HCT116 (cell line): ENCODE measurements at regions of chr2 and their contacts with region 1.

Region 1: DNA sequence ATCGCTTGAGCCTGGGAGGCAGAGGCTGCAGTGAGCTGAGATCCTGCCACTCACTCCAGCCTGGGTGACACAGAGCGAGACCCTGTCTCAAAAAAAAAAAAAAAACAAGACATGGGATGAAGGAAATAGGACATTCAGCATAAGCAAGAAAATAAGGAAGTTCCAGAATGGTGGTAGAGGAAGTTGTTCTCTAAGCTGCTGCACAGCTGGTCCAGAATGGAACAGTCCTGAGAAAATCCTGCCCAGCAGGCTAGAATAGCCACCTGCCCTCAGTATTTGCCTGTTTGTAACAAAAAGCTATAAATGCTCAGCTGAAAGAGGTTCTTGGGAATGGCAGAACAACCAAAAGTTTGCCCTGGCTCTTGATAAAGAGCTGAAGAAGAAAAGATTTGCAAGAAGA is 11.1 kb upstream of the MAPRE3 start:
- DNase-seq: no peak
- ATAC-seq: no peak
- H3K4me3 ChIP-seq: no peak overlapping the region
- H3K27ac ChIP-seq: no peak overlapping the region
- H3K4me1 ChIP-seq: peaks cover 0 to 7% of the 10 kb centered on the region in 2 experiments; a peak in 2 of 4 replicates
- H3K27me3 ChIP-seq: no peaks in the 10 kb centered on the region
- CTCF ChIP-seq: no peak
- POLR2A ChIP-seq: no peak
- RAD21 ChIP-seq: no peak

Region 2: DNA sequence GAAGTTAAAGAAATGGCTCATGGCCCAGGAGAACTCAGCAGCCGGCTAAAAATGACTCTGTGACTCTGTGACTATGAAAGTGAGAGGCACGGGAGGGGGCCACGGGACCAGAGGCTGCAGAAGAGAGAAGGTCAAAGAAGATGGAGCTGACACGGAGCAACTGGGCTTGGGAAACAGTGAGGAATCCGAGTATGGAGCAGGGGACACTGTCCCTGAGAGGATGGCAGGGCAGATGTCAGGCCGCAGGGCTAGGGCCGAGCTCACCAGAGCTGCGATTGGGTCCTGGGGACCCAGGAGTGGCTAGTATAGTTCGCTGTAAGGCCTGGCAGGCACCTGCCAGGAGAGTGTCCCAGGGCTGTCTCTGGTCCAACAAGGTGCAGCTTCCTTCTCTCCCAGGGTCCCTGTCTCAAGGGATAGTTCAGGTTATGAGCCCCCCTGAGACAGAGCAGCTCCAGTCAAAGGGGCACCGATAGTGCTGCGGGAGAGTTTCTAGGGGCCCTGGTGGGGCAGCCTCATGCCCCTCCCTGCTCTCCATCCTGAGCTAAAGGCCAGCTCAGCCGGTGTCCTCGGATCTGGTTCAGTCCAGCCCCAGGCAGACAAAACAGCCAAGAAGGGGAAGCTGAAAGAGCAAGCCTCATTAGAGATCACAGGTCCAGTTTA is 360.9 kb before region 1 on chr2:
- CTCF ChIA-PET with region 1: no interaction called
- POLR2A ChIA-PET with region 1: no interaction called
- RAD21 ChIA-PET with region 1: no interaction called
- intact Hi-C with region 1: no loop called
- DNase-seq: no peak
- ATAC-seq: no peak
- H3K4me3 ChIP-seq: no peak overlapping the region
- H3K27ac ChIP-seq: no peak overlapping the region
- H3K4me1 ChIP-seq: no peaks in the 10 kb centered on the region
- H3K27me3 ChIP-seq: no peaks in the 10 kb centered on the region; the same call in none of the 2 replicates
- CTCF ChIP-seq: no peak
- POLR2A ChIP-seq: no peak
- RAD21 ChIP-seq: no peak

Region 3: DNA sequence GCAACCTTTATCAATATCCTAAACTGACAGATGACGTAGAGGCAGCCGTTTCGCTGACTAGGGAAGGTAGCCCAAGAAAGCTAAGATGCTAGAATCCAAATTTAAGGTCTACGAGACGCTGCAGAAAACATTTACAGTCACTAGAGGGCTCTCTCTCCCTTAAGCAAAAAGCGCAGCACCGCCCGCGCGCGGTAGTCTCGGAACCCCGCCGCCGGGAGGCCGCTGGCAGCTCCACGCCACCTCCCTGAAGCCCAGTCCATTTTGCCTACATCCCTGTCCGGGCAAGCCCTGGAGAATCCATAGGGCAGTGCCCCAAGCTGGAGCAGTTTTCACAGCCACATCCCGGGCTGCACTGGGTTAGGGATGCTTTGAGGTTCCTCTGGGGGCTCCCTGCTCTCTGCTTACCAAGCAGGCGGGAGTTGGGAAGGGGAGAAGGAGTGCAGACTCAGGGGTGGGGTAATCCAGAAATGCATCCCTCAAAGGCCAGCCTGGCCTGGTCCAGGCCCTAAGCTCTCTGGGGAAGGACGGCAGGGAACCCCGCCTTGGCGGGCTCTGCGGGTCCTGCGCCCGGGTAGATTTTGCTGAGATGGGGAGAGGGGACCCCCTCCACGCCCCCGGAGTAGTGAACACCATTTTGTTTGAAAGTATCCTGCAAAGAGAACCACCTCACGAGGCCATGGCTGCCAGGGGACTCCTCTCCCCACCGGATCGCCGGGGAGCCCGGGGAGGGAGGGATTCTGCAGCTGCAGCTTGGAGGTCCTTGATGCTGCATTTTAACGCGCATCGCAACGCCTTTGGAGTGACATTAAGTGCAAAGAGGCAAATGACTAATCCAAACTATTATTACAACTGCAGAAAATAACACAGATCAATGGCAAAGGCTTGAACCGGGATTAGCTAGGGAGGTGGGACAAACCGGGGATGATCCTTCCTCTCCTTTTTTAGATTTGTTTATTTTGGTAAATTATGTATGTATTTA is 112.7 kb before region 1 on chr2:
- CTCF ChIA-PET with region 1: interaction called, 20 read pairs
- POLR2A ChIA-PET with region 1: no interaction called
- RAD21 ChIA-PET with region 1: interaction called in 1 of 2 experiments, 5 read pairs
- intact Hi-C with region 1: no loop called
- DNase-seq: peak; percentile 64
- ATAC-seq: peak; percentile 80
- H3K4me3 ChIP-seq: no peak overlapping the region; a peak in 1 of 4 replicates
- H3K27ac ChIP-seq: no peak overlapping the region
- H3K4me1 ChIP-seq: peaks cover 0 to 22% of the 10 kb centered on the region in 2 experiments; a peak in 3 of 4 replicates
- H3K27me3 ChIP-seq: no peaks in the 10 kb centered on the region
- CTCF ChIP-seq: peak; percentile 79 to 97 (median 84)
- POLR2A ChIP-seq: no peak
- RAD21 ChIP-seq: peak; percentile 97

Region 4: DNA sequence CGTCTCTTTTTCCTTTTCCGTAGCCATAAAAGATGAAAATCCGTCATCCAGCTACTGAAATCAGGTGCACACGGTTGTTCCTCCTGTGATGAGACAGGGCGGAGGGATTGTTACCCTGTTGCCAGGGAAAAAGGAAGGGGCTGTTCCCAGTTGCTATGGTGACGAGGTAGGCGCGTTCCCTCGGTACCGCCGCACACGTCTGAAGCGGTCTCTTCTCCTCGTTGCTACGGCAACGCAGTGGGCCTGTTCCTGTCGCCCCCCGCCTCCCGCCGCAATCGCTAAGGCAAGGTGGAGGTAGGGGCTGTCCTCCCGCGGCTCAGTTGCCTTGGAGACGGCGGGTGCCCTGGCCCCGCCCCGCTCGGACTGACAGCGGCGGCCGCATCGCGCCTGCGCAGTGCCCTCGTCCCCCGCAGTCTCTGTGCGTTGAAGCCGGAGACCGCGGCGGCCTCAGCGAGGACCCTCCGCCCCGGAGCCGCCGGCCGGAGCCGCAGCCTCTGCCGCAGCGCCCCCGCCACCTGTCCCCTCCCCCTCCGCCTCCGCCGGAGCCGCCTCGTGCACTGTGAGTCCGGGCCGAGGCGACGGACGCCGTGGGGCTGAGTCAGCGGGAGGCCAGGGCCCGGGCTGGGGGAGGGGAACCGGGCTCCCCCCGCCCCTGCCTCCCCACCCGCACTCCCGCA is 11.1 kb after region 1 on chr2 and contains the start of gene MAPRE3:
- CTCF ChIA-PET with region 1: interaction called, 10 read pairs
- POLR2A ChIA-PET with region 1: no interaction called
- RAD21 ChIA-PET with region 1: no interaction called
- intact Hi-C with region 1: no loop called
- DNase-seq: peak; percentile 53
- ATAC-seq: peak; percentile 94
- H3K4me3 ChIP-seq: peak within 1 kb of the TSS; percentile 44 to 62
- H3K27ac ChIP-seq: no peak within 1 kb of the TSS
- H3K4me1 ChIP-seq: peaks cover 4 to 23% of the 10 kb centered on the region in 2 experiments; a peak in 3 of 4 replicates
- H3K27me3 ChIP-seq: peaks cover 5% of the 10 kb centered on the region; the same call in 1 of the 2 replicates
- CTCF ChIP-seq: no peak
- POLR2A ChIP-seq: no peak
- RAD21 ChIP-seq: no peak
- total RNA-seq, gene MAPRE3: 12.1 TPM

Region 5: GRCh38 chr2:26982102-26982742 is 22.9 kb after region 1 on chr2:
- CTCF ChIA-PET with region 1: interaction called, 15 read pairs
- POLR2A ChIA-PET with region 1: no interaction called
- RAD21 ChIA-PET with region 1: no interaction called
- intact Hi-C with region 1: no loop called
- DNase-seq: peak; percentile 36
- ATAC-seq: peak; percentile 94
- H3K4me3 ChIP-seq: no peak overlapping the region
- H3K27ac ChIP-seq: no peak overlapping the region
- H3K4me1 ChIP-seq: peaks cover 10 to 29% of the 10 kb centered on the region in 2 experiments
- H3K27me3 ChIP-seq: no peaks in the 10 kb centered on the region
- CTCF ChIP-seq: peak in 2 of 3 experiments; percentile 53 to 55; a peak in 4 of 6 replicates
- POLR2A ChIP-seq: no peak
- RAD21 ChIP-seq: no peak

Region 6: DNA sequence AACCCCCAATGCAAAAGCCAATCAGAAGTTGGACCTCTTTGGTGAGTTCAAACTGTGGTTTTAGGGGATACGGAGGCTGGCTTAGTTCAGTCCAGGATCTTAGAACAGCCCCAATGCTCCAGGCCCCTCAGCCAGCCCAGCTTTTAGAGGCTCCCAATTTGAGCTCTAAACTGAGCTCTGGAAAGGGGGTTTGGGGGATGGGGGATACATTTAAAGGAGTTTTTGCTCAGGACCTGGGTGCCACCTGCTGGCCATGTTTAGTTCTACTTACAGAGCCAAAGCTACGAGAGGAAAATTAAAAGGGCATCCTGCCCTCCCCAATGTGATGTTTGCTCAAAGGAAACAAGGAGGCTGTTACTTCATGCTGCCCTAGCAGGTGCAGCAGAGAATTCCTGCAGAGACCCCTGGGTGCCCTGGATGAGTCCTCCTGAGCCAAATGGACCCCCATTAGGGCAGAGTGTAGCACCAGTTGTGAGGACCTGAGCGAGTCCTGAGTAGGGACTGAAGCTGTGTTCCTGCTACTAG is 57.5 kb after region 1 on chr2:
- CTCF ChIA-PET with region 1: interaction called, 154 read pairs
- POLR2A ChIA-PET with region 1: interaction called, 14 read pairs
- RAD21 ChIA-PET with region 1: interaction called, 28 to 32 read pairs
- intact Hi-C with region 1: loop called (anchors 1 kb)
- DNase-seq: peak; percentile 50
- ATAC-seq: peak; percentile 74
- H3K4me3 ChIP-seq: no peak overlapping the region
- H3K27ac ChIP-seq: no peak overlapping the region
- H3K4me1 ChIP-seq: peaks cover 25 to 50% of the 10 kb centered on the region in 2 experiments
- H3K27me3 ChIP-seq: no peaks in the 10 kb centered on the region
- CTCF ChIP-seq: peak; percentile 68 to 85 (median 84)
- POLR2A ChIP-seq: no peak
- RAD21 ChIP-seq: peak; percentile 92

Region 7: DNA sequence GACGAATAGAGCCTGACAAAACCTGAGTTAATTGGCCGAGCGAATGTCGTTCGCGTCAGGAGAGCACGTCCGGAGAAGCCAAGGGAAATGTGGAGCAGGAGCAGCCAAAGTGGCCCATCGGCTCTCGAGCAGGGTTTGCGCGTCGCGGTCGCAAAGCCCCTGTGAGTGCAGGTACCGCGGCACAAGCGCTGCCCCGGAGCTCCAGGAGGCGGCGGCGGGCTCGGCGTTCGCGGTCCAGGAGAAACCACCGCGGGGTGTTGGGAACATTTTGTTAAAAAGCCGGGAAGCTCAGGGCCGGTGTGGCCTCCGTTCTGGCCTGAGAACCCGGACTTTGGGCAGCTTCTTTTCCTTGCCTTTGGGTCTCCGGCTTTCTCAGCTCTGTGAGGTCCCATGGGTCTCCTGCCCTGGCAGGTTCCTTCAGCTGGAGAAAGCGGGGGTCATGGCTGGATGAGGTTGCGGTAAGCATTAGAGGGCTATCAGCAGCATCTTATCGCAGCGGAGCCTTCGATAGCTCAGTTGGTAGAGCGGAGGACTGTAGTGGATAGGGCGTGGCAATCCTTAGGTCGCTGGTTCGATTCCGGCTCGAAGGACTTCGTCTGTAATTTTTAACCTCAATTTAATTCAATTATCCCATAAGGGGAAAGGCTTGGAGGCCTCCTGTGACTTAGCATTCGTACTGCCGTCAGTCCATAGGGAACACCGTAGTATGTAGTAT is 91.1 kb after region 1 on chr2:
- CTCF ChIA-PET with region 1: interaction called, 21 read pairs
- POLR2A ChIA-PET with region 1: interaction called, 4 read pairs
- RAD21 ChIA-PET with region 1: interaction called, 3 to 7 read pairs
- intact Hi-C with region 1: loop called (anchors 1 kb)
- DNase-seq: peak; percentile 90
- ATAC-seq: peak; percentile 84
- H3K4me3 ChIP-seq: peak overlapping the region; percentile 44 to 94
- H3K27ac ChIP-seq: peak overlapping the region; percentile 69
- H3K4me1 ChIP-seq: peaks cover 11 to 25% of the 10 kb centered on the region in 2 experiments
- H3K27me3 ChIP-seq: no peaks in the 10 kb centered on the region
- CTCF ChIP-seq: peak in 2 of 3 experiments; percentile 30 to 51; a peak in 4 of 6 replicates
- POLR2A ChIP-seq: peak; percentile 71
- RAD21 ChIP-seq: no peak

Region 8: DNA sequence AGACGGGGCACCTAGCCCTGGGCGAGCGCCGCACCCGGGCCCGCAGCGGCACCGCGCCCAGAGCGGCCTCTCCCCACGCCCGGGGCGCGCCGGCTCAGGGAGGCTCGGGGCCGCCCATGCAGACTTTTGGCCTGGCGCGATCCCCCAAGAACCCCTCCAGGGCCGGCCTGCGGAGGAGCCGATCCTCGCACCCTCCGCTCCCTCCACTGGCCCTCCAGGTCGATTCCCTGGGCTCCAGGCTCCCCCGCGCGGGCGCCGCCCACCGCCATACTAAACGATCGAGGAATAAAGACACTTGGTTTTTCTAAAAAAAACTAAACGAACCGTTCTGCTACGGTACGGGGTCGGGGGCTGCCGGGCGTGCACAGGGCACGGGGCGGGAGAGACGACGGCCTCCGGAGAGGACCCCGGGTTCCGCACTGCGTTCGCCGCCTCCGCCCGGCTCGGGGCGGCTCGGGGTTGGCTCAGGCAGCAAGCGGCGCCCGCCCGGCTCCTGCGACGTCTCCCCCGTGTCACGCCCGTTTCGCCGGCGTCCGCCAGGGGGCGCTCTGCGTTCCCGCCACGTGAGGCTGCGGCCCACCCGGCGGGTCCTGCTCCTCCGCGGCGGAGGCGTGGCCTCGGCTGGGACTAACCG is 126.9 kb after region 1 on chr2:
- CTCF ChIA-PET with region 1: interaction called, 15 read pairs
- POLR2A ChIA-PET with region 1: no interaction called
- RAD21 ChIA-PET with region 1: interaction called in 1 of 2 experiments, 4 read pairs
- intact Hi-C with region 1: loop called (anchors 1 kb)
- DNase-seq: peak; percentile 77
- ATAC-seq: peak; percentile 85
- H3K4me3 ChIP-seq: peak overlapping the region; percentile 57 to 61
- H3K27ac ChIP-seq: peak overlapping the region; percentile 77
- H3K4me1 ChIP-seq: peaks cover 13 to 35% of the 10 kb centered on the region in 2 experiments
- H3K27me3 ChIP-seq: no peaks in the 10 kb centered on the region
- CTCF ChIP-seq: peak in 2 of 3 experiments; percentile 53 to 73; a peak in 4 of 6 replicates
- POLR2A ChIP-seq: peak; percentile 32
- RAD21 ChIP-seq: no peak